ENCODE measurements at regions of chr7 and their contacts with region 1.

Region 1: DNA sequence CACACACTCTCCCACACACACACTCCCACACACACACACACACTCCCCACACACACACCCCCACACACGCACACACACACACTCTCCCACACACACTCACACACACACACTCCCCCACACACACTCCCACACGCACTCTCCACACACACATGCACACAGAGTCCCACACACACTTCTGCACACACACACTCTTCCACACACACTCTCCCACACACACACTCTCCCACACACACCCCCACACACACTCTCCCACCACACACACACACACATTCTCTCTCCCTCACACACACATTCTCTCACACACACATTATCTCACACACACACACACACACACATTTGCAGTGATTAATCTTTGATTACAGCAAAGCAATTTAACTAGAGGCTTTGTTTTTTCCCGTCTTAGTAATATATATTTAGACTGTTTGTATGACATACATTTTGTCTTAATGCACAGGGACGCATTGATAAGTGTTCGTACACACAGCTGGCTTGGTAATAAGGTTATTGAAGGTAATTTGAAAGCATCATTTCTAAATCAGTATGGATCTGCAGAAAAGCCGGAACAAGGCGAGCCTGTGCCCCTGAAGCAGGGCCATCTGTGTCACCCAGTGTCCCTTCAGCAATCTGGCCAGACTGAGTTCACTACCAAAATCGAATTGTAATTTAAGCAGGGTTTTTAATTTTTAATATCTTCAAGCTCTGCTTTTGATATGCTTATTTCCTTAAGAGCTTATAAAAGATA is 69.9 kb upstream of the SH2B2 start:
- DNase-seq: no peak
- ATAC-seq: no peak
- H3K4me3 ChIP-seq: no peak overlapping the region
- H3K27ac ChIP-seq: no peak overlapping the region
- H3K4me1 ChIP-seq: no peaks in the 10 kb centered on the region
- H3K27me3 ChIP-seq: no peaks in the 10 kb centered on the region
- CTCF ChIP-seq: no peak

Region 2: GRCh38 chr7:101465576-101466196 is 751.1 kb before region 1 on chr7:
- CTCF ChIA-PET with region 1: no interaction called
- POLR2A ChIA-PET with region 1: interaction called, 14 read pairs
- in situ Hi-C with region 1: no loop called
- intact Hi-C with region 1: no loop called
- DNase-seq: no peak
- ATAC-seq: no peak
- H3K4me3 ChIP-seq: no peak overlapping the region
- H3K27ac ChIP-seq: no peak overlapping the region; the same call in 1 of the 2 replicates
- H3K4me1 ChIP-seq: peaks cover 12% of the 10 kb centered on the region; the same call in 1 of the 2 replicates
- H3K27me3 ChIP-seq: no peaks in the 10 kb centered on the region
- CTCF ChIP-seq: no peak

Region 3: GRCh38 chr7:102169651-102170392 is 46.9 kb before region 1 on chr7:
- CTCF ChIA-PET with region 1: no interaction called
- POLR2A ChIA-PET with region 1: no interaction called
- in situ Hi-C with region 1: no loop called
- intact Hi-C with region 1: no loop called
- DNase-seq: no peak
- ATAC-seq: no peak
- H3K4me3 ChIP-seq: no peak overlapping the region
- H3K27ac ChIP-seq: no peak overlapping the region
- H3K4me1 ChIP-seq: no peaks in the 10 kb centered on the region
- H3K27me3 ChIP-seq: no peaks in the 10 kb centered on the region
- CTCF ChIP-seq: no peak